ENCODE measurements at regions of chr15 and their contacts with region 1.

Region 1: DNA sequence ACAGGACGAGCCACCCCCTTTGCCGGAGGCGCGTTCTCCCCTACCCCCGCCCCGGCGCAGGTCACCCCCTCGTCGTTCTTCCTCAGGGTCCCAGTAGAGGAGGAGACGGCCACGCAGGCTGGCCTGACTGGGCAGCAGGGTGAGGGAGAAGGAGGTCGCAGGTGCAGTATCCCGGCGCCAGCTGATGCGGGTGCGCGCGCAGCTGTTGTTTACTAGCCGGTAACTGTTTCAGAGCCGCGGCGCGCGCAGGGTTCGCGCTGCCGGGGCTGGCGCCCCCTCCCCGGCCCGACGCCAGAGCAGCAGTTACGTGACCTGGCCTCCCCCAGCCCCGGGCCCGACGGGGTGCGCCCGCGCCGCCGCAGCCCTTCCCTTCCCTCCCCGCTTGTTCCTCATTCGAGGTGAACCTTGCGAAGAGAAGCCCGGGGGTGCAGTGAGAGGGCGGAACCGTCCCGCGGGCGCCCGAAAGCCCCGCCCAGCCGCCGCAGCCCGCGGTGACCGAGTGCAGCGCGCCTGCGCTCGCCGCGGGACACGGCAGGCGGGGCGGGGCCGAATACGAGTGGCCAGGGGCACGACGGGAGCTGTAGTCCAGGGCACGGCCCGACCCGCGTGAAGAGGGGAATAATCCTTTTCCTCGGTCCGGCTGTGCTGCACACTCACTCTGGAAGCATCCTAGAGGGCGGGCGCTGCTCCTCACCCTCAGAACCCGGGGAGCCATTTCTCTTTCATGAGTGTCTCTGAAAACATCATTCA is at the start of gene SLC12A6:
- DNase-seq: peak; percentile 95 to 97
- ATAC-seq: peak; percentile 96
- H3K4me3 ChIP-seq: peak within 1 kb of the TSS; percentile 71 to 84
- H3K27ac ChIP-seq: peak within 1 kb of the TSS in 1 of 2 donors; percentile 60
- H3K4me1 ChIP-seq: no peaks in the 10 kb centered on the region
- H3K27me3 ChIP-seq: no peaks in the 10 kb centered on the region
- total RNA-seq, gene SLC12A6: 40.5 to 46.0 TPM

Region 2: DNA sequence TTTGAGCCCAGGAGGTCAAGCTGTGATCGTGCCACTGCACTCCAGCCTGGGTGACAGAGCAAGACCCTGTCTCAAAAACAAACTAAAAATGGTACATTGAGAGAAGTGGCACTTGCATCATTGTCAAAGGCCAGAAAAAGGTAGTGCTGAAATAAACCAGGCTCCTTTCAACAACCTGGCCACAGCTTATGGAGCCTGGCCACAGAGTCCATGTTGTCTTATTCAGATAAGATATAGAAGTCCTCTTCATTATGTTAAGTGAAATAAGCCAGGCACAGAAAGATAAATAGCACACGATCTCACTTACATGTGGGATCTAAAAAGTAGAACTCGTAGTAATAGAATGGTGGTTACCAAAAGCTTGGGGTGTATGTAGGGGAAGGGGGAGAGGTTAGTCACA is 78.2 kb before region 1 on chr15:
- intact Hi-C with region 1: loop called in 1 of 2 experiments (anchors 5 kb)
- DNase-seq: no peak
- ATAC-seq: no peak
- H3K4me3 ChIP-seq: no peak overlapping the region
- H3K27ac ChIP-seq: no peak overlapping the region
- H3K4me1 ChIP-seq: no peaks in the 10 kb centered on the region
- H3K27me3 ChIP-seq: no peaks in the 10 kb centered on the region

Region 3: DNA sequence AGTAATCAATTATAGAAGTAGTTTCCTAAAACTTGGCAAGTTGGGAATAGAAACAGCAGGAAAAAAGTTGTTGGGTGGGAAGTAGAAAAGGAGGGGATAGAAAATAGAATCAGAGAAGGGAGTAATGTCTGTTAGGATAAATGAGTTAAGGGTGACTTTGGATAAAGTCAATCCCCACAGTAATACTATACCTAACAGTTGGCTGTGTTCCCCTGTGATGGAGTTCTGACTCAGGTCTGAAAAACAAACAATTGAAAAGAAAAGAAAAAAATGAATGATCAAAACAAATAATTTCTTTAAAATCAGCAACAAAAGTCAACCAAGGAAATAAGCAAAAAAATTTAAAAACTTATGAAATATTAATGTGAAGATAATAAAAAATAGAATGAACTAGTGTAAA is 62.6 kb before region 1 on chr15:
- intact Hi-C with region 1: loop called in 1 of 2 experiments (anchors 5 kb)
- DNase-seq: no peak
- ATAC-seq: no peak
- H3K4me3 ChIP-seq: no peak overlapping the region
- H3K27ac ChIP-seq: no peak overlapping the region
- H3K4me1 ChIP-seq: peaks cover 0 to 2% of the 10 kb centered on the region in 2 donors
- H3K27me3 ChIP-seq: no peaks in the 10 kb centered on the region

Measured in aorta (tissue), 5 donors.